ENCODE measurements at regions of chr19 and their contacts with region 1.

Region 1: GRCh38 chr19:58002384-58003173 is at the start of gene ZNF606:
- DNase-seq: peak; percentile 86
- H3K4me3 ChIP-seq: peak within 1 kb of the TSS; percentile 57 to 91 (median 77)
- H3K27ac ChIP-seq: peak within 1 kb of the TSS; percentile 62
- H3K4me1 ChIP-seq: no peaks in the 10 kb centered on the region
- H3K27me3 ChIP-seq: no peaks in the 10 kb centered on the region
- CTCF ChIP-seq: no peak
- total RNA-seq, gene ZNF606: 8.0 to 19.0 TPM

Region 2: DNA sequence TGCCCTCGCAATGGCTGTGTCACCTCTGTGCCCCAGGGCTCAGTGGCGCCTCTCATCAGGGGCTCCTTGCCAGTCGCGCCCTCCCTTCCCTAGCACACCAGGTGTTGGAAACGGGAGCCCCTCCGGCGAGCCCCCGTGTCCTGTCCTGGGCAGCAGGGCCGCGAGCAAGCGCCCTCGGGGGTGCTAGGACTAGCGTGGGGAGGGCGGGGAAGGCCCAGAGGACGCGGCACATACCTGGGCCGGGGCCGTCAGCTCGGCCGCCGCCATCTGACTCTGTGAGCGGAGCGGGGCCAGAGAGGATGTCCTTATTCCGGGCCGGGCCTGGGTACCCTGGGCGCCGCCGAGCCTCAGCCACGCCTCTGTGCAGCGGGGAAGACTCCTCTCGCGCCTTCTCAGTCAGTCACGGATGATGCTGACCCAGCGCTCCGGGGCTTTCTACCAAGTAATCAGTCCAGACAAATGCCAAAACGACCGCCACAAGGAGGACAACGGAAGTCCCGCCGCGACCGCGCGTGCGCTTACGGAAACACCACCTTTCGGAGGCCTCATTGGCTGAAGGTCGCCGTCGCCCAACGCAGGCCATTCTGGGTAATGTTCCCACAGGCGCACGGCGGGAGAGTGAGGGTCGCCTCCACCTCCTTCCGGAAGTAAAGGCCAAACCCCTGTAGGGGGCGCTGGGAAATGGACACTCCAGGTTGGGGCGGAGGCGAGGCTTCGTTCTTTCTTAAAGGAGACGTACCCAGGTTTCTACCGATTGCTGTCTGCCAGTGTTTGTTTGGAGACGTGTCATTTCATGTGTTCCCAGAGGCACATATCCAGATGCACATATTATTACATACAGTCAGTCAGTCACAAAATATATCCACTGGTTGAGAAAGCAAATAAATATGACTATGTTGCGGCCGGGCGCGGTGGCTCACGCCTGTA is 55.1 kb before region 1 on chr19 and contains the start of gene ZNF256:
- CTCF ChIA-PET with region 1: no interaction called
- dilution Hi-C with region 1: no loop called
- in situ Hi-C with region 1: no loop called
- intact Hi-C with region 1: loop called (anchors 1 kb)
- DNase-seq: peak; percentile 94
- H3K4me3 ChIP-seq: peak within 1 kb of the TSS; percentile 78 to 80 (median 79)
- H3K27ac ChIP-seq: peak within 1 kb of the TSS; percentile 13
- H3K4me1 ChIP-seq: peaks cover 3% of the 10 kb centered on the region
- H3K27me3 ChIP-seq: no peaks in the 10 kb centered on the region
- CTCF ChIP-seq: peak; percentile 36 to 59
- total RNA-seq, gene ZNF256: 3.7 to 5.8 TPM

Region 3: DNA sequence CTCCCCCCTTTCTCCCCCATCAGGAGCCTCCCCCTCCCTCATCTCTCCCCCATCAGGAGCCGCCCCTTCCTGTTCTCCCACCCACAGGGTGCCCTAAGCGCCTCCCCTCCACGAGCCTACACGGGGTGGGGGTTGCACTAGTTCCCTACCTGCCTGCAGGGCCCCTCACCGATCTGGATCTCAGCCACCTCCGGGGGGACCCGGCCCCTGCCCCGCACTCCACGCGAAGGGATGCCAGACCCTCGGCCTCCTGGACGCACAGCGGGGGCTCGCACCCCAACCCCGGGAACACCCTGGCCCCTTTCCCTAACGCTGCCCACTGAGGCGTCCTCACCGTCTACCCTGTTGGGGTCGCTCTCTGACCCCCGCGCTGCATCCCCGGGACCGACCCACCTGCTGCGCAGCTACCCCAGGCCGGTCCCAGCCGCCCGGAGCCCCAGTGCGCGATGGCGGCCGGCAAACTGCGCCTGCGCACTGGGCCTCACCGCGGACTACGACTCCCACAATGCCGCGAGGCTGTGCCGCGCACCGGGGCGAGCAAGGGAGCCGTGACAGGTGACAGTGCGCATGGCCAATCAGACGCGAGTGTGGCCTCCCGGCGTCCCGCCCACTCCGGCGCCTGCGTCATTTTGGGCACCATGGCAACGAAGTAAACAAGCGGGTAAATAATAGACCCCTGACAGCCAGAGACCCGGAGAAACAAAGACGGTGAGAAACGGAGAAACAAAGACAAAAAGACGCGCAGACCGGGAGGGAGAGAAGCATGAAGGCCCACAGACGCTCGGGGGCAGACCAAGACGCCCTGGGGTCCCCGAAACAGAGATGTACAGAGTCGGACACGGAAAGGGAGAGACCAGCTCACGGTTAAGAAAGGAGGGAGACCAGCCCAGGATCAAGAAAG is 95.5 kb after region 1 on chr19 and contains the start of gene ZSCAN18:
- CTCF ChIA-PET with region 1: no interaction called
- dilution Hi-C with region 1: no loop called
- in situ Hi-C with region 1: no loop called
- intact Hi-C with region 1: loop called (anchors 10 kb)
- DNase-seq: peak; percentile 84
- H3K4me3 ChIP-seq: peak within 1 kb of the TSS; percentile 50 to 78 (median 59)
- H3K27ac ChIP-seq: peak within 1 kb of the TSS; percentile 92
- H3K4me1 ChIP-seq: no peaks in the 10 kb centered on the region
- H3K27me3 ChIP-seq: no peaks in the 10 kb centered on the region
- CTCF ChIP-seq: no peak
- total RNA-seq, gene ZSCAN18: 16.3 to 59.3 TPM

Region 4: DNA sequence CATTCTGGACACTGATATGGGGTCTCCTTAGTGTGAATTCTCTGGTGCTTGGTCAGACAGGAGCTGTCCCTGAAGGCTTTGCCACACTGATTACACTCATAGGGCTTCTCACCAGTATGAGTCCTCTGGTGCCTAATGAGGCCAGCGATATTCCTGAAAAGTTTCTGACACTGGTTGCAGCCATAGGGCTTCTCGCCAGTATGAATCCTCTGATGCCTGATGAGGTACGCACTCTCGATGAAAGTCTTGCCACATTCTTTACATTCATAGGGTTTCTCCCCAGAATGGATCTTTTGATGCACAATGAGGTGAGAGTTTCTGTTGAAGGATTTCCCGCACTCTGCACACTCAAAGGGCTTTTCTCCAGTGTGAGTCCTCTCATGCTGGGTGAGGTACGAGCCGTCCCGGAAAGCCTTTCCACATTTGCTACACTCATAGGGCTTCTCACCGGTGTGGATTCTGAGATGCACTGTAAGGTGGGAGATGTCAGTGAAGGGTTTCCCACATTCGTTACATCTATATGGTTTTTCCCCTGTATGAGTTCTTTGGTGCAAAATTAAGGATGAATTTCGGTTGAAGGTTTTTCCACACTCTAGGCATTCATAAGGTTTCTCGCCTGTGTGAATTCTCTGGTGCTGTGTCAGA is 125.6 kb after region 1 on chr19:
- CTCF ChIA-PET with region 1: no interaction called
- dilution Hi-C with region 1: no loop called
- in situ Hi-C with region 1: no loop called
- intact Hi-C with region 1: no loop called
- DNase-seq: no peak
- H3K4me3 ChIP-seq: no peak overlapping the region
- H3K27ac ChIP-seq: no peak overlapping the region
- H3K4me1 ChIP-seq: no peaks in the 10 kb centered on the region
- H3K27me3 ChIP-seq: no peaks in the 10 kb centered on the region
- CTCF ChIP-seq: no peak

Measured in mammary epithelial cell (primary cell).